ENCODE measurements at regions of chr7 and their contacts with region 1.

Region 1: GRCh38 chr7:151570366-151570915 is 50.7 kb upstream of the RHEB start:
- DNase-seq: no peak
- ATAC-seq: no peak
- H3K4me3 ChIP-seq: no peak overlapping the region
- H3K27ac ChIP-seq: no peak overlapping the region
- H3K4me1 ChIP-seq: no peaks in the 10 kb centered on the region; a peak in 1 of 5 replicates
- H3K27me3 ChIP-seq: peaks cover 37 to 42% of the 10 kb centered on the region in 2 experiments
- CTCF ChIP-seq: peak in 2 of 3 experiments; percentile 46 to 76; a peak in 4 of 6 replicates
- EP300 ChIP-seq: no peak
- POLR2A ChIP-seq: no peak
- RAD21 ChIP-seq: peak; percentile 47 to 72; a peak in 3 of 4 replicates

Region 2: DNA sequence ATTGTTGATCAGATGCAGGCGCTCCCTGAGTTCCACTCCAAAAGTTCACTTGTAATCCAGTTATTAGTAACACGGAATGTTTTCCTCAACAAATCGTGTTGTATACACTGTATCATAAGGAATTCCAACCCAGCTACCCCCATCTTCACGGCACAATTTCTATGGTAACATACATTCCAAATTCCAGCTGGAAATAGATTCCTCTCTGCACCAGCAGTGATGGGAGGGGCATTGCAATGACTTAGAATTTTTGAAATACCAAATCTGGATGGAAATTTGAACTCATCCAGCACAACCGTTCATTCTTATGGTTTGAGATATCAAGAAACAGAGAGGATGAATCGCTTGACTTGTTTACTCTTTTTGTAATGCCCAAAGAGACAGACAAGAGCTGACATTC is 11.9 kb before region 1 on chr7:
- CTCF ChIA-PET with region 1: no interaction called
- POLR2A ChIA-PET with region 1: interaction called, 10 read pairs
- in situ Hi-C with region 1: no loop called
- intact Hi-C with region 1: no loop called
- DNase-seq: no peak
- ATAC-seq: no peak
- H3K4me3 ChIP-seq: no peak overlapping the region
- H3K27ac ChIP-seq: no peak overlapping the region
- H3K4me1 ChIP-seq: peaks cover 0 to under 1% of the 10 kb centered on the region in 2 experiments; a peak in 1 of 5 replicates
- H3K27me3 ChIP-seq: peaks cover 53 to 68% of the 10 kb centered on the region in 2 experiments; a peak in 4 of 5 replicates
- CTCF ChIP-seq: no peak
- EP300 ChIP-seq: no peak
- POLR2A ChIP-seq: no peak
- RAD21 ChIP-seq: no peak

Region 3: GRCh38 chr7:151705636-151706276 is 135.3 kb after region 1 on chr7:
- CTCF ChIA-PET with region 1: interaction called, 5 read pairs
- POLR2A ChIA-PET with region 1: no interaction called
- in situ Hi-C with region 1: no loop called
- intact Hi-C with region 1: loop called (anchors 5 kb)
- DNase-seq: peak; percentile 48 to 65 (median 54)
- ATAC-seq: peak; percentile 84
- H3K4me3 ChIP-seq: no peak overlapping the region
- H3K27ac ChIP-seq: no peak overlapping the region
- H3K4me1 ChIP-seq: peaks cover 0 to 4% of the 10 kb centered on the region in 2 experiments; a peak in 2 of 5 replicates
- H3K27me3 ChIP-seq: peaks cover 49 to 88% of the 10 kb centered on the region in 2 experiments
- CTCF ChIP-seq: peak; percentile 64 to 73 (median 67)
- EP300 ChIP-seq: no peak
- POLR2A ChIP-seq: no peak
- RAD21 ChIP-seq: peak; percentile 58 to 59

Region 4: GRCh38 chr7:151759591-151760042 is 189.2 kb after region 1 on chr7:
- CTCF ChIA-PET with region 1: interaction called, 8 read pairs
- POLR2A ChIA-PET with region 1: interaction called, 3 read pairs
- in situ Hi-C with region 1: no loop called
- intact Hi-C with region 1: loop called (anchors 2 kb)
- DNase-seq: peak; percentile 77 to 91 (median 86)
- ATAC-seq: peak; percentile 90
- H3K4me3 ChIP-seq: no peak overlapping the region
- H3K27ac ChIP-seq: no peak overlapping the region
- H3K4me1 ChIP-seq: peaks cover 0 to 7% of the 10 kb centered on the region in 2 experiments; a peak in 3 of 5 replicates
- H3K27me3 ChIP-seq: peaks cover 43 to 91% of the 10 kb centered on the region in 2 experiments
- CTCF ChIP-seq: peak; percentile 88 to 97 (median 96)
- EP300 ChIP-seq: no peak
- POLR2A ChIP-seq: no peak
- RAD21 ChIP-seq: peak; percentile 78 to 88

Measured in K562 (cell line).